ENCODE measurements at regions of chr10 and their contacts with region 1.

Region 1: GRCh38 chr10:51083356-51083853 is 9.1 kb downstream of the PRKG1 start:
- DNase-seq: no peak
- ATAC-seq: peak; percentile 11

Region 2: GRCh38 chr10:51162002-51162401 is 78.6 kb after region 1 on chr10:
- intact Hi-C with region 1: loop called (anchors 5 kb)
- DNase-seq: peak; percentile 50
- ATAC-seq: peak; percentile 94